Endothelial cell of umbilical vein (primary cell): ENCODE measurements at regions of chr7 and their contacts with region 1.

Region 1: GRCh38 chr7:41711283-41712064 is 8.6 kb upstream of the INHBA start:
- DNase-seq: peak; percentile 48
- H3K4me3 ChIP-seq: no peak overlapping the region
- H3K27ac ChIP-seq: no peak overlapping the region
- H3K4me1 ChIP-seq: no peaks in the 10 kb centered on the region
- H3K27me3 ChIP-seq: peaks cover 0 to 2% of the 10 kb centered on the region in 2 experiments
- CTCF ChIP-seq: peak; percentile 52 to 69
- POLR2A ChIP-seq: no peak

Region 2: DNA sequence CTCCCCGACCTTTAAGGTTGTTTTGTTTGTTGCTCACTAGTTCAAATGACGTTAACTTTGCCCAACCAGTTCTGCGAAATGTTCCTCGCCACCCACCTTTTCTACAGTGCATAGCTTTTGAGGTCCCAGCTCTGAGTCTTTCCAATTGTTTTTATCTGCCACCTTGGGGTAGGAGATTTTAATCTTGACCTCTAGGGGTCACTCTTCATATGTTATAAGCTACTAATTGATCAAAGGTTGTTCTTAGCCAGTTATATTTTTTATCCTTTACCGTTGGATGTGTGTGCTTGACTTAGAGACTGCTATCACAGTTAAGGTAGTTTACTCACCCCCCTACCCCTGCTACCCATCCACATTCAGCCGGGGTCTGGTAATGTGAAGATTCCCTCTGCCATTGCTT is 1204.3 kb before region 1 on chr7:
- CTCF ChIA-PET with region 1: no interaction called
- POLR2A ChIA-PET with region 1: no interaction called
- dilution Hi-C with region 1: no loop called
- intact Hi-C with region 1: loop called (anchors 1 kb)
- DNase-seq: no peak
- H3K4me3 ChIP-seq: no peak overlapping the region
- H3K27ac ChIP-seq: no peak overlapping the region
- H3K4me1 ChIP-seq: no peaks in the 10 kb centered on the region
- H3K27me3 ChIP-seq: no peaks in the 10 kb centered on the region
- CTCF ChIP-seq: peak in 1 of 2 donors; percentile 19
- POLR2A ChIP-seq: no peak

Region 3: DNA sequence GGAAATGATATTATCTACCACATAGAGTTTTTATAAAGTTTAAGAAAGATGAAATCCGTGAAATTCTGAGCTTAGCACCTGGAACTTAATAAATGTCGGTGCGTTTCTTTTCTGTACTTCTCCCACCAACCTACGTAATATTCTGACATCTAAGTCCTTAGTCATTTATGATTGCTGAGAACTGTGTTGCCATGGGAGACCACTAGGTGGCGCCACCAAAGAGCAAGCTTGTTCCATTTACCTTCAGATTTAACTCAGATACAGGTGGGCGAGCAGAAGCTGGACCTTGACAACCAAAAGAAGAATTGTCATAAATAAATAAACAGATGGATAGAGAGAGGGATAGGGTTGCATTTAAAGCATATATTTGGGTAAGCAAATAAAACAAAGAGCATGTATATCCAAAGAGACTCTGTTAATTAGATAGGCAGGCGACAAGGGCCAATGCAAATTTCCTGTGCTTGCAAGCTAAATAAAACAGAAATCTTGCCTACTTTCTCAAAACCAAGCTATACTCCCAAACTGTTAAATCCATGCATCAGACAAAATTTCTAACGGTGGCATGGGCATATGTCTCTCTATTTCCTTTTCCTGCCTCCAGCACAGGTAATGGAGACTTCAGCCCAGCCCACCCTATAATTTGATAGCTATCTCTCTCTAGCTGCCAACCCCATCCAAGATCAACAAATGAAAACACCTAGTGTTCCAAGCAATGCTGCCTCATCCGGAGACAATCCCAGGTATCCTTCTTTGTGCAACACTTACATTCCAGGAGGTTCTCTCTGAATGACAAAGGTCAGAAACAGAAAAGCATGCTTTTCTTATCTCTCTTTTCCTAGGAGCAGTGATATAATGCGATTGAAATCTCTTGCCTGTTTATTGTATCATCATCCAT is 708.2 kb before region 1 on chr7:
- CTCF ChIA-PET with region 1: interaction called, 87 read pairs
- POLR2A ChIA-PET with region 1: no interaction called
- dilution Hi-C with region 1: no loop called
- intact Hi-C with region 1: loop called (anchors 1 kb)
- DNase-seq: peak; percentile 80
- H3K4me3 ChIP-seq: no peak overlapping the region
- H3K27ac ChIP-seq: no peak overlapping the region
- H3K4me1 ChIP-seq: no peaks in the 10 kb centered on the region
- H3K27me3 ChIP-seq: no peaks in the 10 kb centered on the region
- CTCF ChIP-seq: peak; percentile 73 to 77
- POLR2A ChIP-seq: no peak

Region 4: DNA sequence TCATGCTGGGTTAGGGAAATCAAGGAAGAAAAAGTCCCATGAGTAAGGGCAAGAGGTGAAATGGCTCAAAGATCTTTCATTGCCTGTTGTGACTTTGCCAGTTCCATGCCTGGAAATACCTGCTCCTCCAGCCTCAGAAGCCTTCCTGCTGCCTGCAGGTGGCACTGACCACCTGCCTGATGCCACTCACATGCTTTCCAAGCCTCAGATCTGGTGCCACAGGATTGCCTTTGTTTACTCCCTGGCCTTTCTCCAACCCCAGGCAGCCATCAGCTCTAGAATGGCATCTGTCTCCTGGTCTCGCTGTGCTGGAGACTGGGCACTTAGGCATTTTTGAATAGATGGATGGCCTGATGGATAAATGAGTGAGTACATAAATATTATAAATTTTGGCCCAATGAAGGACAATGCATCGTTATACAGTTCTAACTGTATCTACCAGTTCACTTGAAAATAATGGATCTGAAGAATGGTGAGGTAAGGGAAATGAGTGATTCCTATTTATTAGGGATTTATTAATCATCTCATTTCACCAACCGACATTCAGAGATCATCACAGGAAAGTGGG is 665.8 kb before region 1 on chr7:
- CTCF ChIA-PET with region 1: interaction called, 10 read pairs
- POLR2A ChIA-PET with region 1: no interaction called
- dilution Hi-C with region 1: no loop called
- intact Hi-C with region 1: no loop called
- DNase-seq: peak; percentile 18
- H3K4me3 ChIP-seq: no peak overlapping the region
- H3K27ac ChIP-seq: no peak overlapping the region
- H3K4me1 ChIP-seq: no peaks in the 10 kb centered on the region
- H3K27me3 ChIP-seq: no peaks in the 10 kb centered on the region
- CTCF ChIP-seq: peak in 1 of 2 donors; percentile 23
- POLR2A ChIP-seq: no peak

Region 5: GRCh38 chr7:41725013-41725412 is 13.5 kb after region 1 on chr7:
- CTCF ChIA-PET with region 1: interaction called, 13 read pairs
- POLR2A ChIA-PET with region 1: no interaction called
- dilution Hi-C with region 1: no loop called
- intact Hi-C with region 1: no loop called
- DNase-seq: no peak
- H3K4me3 ChIP-seq: no peak overlapping the region
- H3K27ac ChIP-seq: no peak overlapping the region
- H3K4me1 ChIP-seq: no peaks in the 10 kb centered on the region
- H3K27me3 ChIP-seq: peaks cover 3 to 8% of the 10 kb centered on the region in 2 experiments
- CTCF ChIP-seq: no peak
- POLR2A ChIP-seq: no peak